Activated CD8-positive, alpha-beta T cell treated with anti-CD3 and anti-CD28 coated beads, Interleukin-2, amount 10 ng/mL, durations not matched to agents 7 days and 5 days (primary cell): ENCODE measurements at regions of chr17 and their contacts with region 1.

Region 1: DNA sequence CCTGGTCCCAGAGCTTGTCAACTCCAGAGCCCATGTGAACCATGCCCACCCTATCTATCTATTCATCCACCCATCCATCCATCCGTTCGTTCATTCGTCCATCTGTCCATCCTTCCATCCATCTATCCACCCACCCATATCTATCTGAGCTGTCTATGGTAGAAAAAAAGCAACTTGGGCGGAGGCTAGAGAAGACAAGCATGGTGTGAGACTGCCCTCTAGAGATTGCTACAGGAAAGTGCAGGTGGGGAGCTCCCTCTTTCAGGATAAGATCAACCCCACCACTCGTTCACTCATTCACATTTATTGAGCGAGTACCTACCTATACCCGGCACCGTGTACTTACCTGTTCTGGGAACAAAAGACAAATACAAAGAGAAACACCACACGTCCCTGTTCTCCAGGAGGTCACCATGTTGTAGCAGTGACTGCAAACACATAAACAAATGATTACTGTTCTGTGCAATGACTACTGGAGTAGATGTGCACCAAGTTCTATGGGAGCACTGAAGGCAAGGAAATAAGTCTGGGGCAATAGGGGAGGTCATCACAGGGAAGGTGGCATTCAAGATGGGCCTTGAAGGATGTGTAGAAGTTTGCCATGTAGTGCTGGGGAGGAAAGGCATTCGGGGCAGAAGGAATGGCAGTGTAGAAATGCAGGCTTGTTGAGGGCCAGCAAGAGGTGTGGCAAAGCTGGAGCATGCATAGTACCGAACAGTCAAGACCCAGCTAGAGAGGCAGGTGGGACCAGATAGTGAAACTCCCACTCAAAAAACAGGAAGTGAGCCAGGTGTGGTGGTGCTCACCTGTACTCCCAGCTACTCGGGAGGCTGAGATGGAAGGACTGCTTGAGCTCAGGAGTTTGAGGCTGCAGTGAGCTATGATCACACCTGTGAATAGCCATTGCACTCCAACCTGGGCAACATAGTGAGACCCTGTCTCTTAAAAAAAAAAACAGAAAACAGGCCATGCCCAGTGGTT is 13.4 kb upstream of the ATP5MC1 start:
- DNase-seq: peak; percentile 73
- ATAC-seq: peak; percentile 82
- H3K4me3 Mint-ChIP-seq: no peak overlapping the region
- H3K27ac Mint-ChIP-seq: no peak overlapping the region
- H3K4me1 Mint-ChIP-seq: peaks cover 25% of the 10 kb centered on the region
- H3K27me3 Mint-ChIP-seq: peaks cover 9% of the 10 kb centered on the region

Region 2: GRCh38 chr17:48724251-48725003 is 154.8 kb before region 1 on chr17:
- CTCF ChIA-PET with region 1: interaction called, 67 read pairs
- POLR2A ChIA-PET with region 1: no interaction called
- DNase-seq: peak; percentile 88
- ATAC-seq: peak; percentile 80
- H3K4me3 Mint-ChIP-seq: peak overlapping the region; percentile 45
- H3K27ac Mint-ChIP-seq: no peak overlapping the region
- H3K4me1 Mint-ChIP-seq: peaks cover 42% of the 10 kb centered on the region
- H3K27me3 Mint-ChIP-seq: peaks cover 94% of the 10 kb centered on the region

Region 3: GRCh38 chr17:48791128-48792032 is 87.8 kb before region 1 on chr17:
- CTCF ChIA-PET with region 1: interaction called, 15 read pairs
- POLR2A ChIA-PET with region 1: no interaction called
- DNase-seq: peak; percentile 45
- ATAC-seq: peak; percentile 74
- H3K4me3 Mint-ChIP-seq: no peak overlapping the region
- H3K27ac Mint-ChIP-seq: no peak overlapping the region
- H3K4me1 Mint-ChIP-seq: peaks cover 18% of the 10 kb centered on the region
- H3K27me3 Mint-ChIP-seq: peaks cover 29% of the 10 kb centered on the region

Region 4: DNA sequence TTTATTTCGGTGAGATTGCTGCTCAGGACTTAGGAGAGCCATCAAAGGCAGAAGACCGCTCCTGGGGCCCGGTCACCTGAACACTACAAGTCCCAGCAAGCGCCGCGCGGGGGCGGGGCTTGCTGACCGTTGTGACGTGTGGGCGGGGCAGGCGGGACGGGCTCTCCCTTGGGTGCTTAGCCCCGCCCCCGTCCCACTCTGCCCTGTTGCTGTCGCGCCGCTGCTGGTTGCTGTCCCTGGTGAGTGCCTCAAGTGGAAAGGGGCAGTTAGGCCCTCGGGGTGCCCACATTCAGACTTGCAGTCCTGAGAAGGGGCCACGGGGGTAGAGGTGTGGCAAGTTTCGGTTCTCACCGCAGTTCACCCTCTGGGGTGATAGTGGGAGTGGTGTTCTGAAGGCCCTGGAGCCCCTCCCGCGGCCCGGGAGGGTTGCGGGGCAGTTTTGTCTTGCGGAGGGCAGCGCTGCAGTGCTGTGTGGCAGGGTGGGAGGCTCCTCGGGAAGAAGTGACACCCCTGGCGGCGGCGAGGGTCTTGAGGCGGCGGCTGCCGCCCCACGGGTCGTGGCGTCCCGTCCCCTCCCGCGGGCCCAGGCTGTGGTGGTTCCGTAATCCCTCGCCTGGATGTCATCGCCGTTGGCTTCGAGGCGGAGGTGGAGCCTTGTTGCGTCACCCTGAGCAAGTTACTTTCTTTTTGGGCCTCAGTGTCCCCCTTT is 48.2 kb before region 1 on chr17 and contains the start of gene CALCOCO2:
- CTCF ChIA-PET with region 1: interaction called, 20 read pairs
- POLR2A ChIA-PET with region 1: no interaction called
- DNase-seq: peak; percentile 93
- ATAC-seq: peak; percentile 90
- H3K4me3 Mint-ChIP-seq: peak within 1 kb of the TSS; percentile 97
- H3K27ac Mint-ChIP-seq: peak within 1 kb of the TSS; percentile 99
- H3K4me1 Mint-ChIP-seq: peaks cover 47% of the 10 kb centered on the region
- H3K27me3 Mint-ChIP-seq: peaks cover 3% of the 10 kb centered on the region
- total RNA-seq, gene CALCOCO2: 152 to 167 TPM

Region 5: GRCh38 chr17:48850792-48851323 is 28.4 kb before region 1 on chr17:
- CTCF ChIA-PET with region 1: interaction called, 22 read pairs
- POLR2A ChIA-PET with region 1: no interaction called
- DNase-seq: no peak
- ATAC-seq: peak; percentile 89
- H3K4me3 Mint-ChIP-seq: no peak overlapping the region
- H3K27ac Mint-ChIP-seq: peak overlapping the region; percentile 9
- H3K4me1 Mint-ChIP-seq: peaks cover 13% of the 10 kb centered on the region
- H3K27me3 Mint-ChIP-seq: no peaks in the 10 kb centered on the region

Region 6: GRCh38 chr17:48908047-48908843 is 29.0 kb after region 1 on chr17 and contains the start of gene UBE2Z:
- CTCF ChIA-PET with region 1: interaction called, 11 read pairs
- POLR2A ChIA-PET with region 1: interaction called, 4 read pairs
- DNase-seq: peak; percentile 91
- ATAC-seq: peak; percentile 90
- H3K4me3 Mint-ChIP-seq: peak within 1 kb of the TSS; percentile 99
- H3K27ac Mint-ChIP-seq: peak within 1 kb of the TSS; percentile 97
- H3K4me1 Mint-ChIP-seq: peaks cover 49% of the 10 kb centered on the region
- H3K27me3 Mint-ChIP-seq: no peaks in the 10 kb centered on the region
- total RNA-seq, gene UBE2Z: 61.8 to 62.4 TPM